ENCODE measurements at regions of chr7 and their contacts with region 1.

Region 1: DNA sequence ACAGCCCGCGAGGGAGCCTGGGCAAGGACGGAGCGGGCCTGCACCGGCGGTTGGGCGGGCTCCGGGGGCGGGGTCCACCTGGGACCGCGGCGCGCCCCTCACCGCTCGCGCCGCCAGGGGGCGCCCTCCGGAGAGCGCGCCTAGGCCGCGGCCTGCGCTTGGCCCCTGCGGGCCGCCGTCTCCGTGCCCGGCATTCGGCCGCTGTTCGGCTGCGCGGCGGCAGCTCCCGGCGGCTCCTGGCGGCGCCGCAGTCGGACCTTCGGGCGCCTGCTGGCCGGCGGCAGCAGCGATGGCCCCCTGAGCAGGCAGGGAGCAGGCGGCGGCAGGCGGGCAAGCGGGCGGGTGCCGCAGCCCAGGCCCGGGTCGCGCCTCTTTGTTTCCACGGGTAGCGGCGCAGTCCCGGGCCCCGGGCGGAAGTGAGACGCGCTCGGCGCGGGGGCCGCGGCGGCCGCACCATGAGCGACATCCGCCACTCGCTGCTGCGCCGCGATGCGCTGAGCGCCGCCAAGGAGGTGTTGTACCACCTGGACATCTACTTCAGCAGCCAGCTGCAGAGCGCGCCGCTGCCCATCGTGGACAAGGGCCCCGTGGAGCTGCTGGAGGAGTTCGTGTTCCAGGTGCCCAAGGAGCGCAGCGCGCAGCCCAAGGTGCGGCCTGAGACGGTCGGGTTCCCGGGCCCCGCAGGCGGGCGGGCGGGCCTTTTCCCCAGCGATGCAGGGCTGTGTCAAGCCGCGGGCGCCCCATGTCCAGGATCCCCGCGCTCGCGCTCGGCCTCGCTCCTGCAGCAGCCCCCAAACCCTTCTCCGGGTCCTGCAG is at the start of gene INTS15:
- DNase-seq: peak; percentile 30 to 93
- H3K4me3 ChIP-seq: peak within 1 kb of the TSS; percentile 83
- CTCF ChIP-seq: no peak
- POLR2A ChIP-seq: no peak
- total RNA-seq, gene INTS15: 21.3 to 34.5 (median 29.7) TPM

Region 2: DNA sequence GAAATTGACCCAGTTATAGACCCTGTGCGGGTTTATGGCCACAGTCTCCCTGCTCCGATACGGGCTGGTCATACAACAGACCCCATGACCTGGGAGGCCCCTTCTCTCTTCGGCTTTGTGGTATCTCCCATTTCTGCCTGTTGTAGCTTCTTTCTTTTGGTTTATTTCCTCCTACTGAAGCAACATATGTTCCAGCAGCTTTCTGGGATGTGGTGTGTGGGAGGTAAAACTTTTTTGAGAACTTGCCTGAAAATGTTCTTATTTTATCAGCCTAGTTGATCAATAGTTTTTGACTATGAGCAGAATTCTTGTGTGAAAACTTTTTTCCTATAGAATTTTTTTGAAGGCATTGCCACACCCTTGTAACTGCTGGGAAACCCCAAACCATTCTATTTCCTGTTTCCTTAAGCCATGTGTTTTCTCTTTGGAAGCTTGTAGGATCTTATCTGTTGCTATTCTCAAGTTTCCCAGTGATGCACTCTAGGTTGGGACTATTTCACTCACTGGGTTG is 222.3 kb before region 1 on chr7:
- intact Hi-C with region 1: no loop called
- DNase-seq: no peak
- H3K4me3 ChIP-seq: no peak overlapping the region
- CTCF ChIP-seq: no peak
- POLR2A ChIP-seq: no peak

Region 3: DNA sequence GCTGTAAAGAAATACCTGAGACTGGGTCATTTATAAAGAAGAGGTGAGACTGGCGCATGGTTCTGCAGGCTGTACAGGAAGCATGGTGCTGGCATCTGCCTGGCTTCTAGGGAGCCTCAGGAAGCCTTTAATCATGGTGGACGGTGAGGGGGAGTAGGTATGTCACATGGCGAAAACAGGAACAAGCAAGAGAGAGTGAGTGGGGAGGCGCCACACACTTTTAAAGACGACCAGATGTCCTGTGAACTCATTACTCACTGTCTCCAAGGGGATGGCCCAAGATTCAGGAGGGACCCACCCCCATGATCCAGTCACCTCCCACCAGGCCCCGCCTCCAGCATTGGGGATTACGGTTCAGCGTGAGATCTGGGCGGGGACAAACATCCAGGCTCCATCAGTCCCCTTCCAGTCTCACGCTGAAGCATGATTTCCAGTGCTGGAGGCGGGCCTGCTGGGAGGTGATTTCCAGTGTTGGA is 50.2 kb after region 1 on chr7:
- intact Hi-C with region 1: loop called (anchors 2 kb)
- DNase-seq: no peak
- H3K4me3 ChIP-seq: no peak overlapping the region
- CTCF ChIP-seq: no peak
- POLR2A ChIP-seq: no peak

Measured in lower leg skin (tissue), 4 donors.